ENCODE measurements at regions of chr3 and their contacts with region 1.

Region 1: DNA sequence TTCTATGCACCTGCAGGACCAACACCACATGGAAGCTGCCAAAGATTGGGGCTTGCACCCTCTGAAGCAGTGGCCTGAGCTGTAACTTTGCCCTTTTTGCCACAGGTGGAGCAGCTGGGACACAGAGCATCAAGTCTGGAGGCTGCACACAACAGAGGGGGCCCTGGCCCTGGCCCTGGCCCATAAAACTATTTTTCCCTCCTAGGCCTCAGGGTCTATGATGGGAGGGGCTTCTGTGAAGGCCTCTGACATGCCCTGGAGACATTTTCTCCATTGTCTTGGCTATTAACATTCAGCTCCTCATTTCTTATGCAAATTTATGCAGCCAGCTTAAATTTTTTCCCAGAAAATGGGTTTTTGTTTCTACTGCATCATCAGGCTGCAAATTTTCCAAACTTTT is 335.5 kb downstream of the ARPP21 start:
- ATAC-seq: no peak
- H3K4me3 ChIP-seq: no peak overlapping the region
- H3K27ac ChIP-seq: no peak overlapping the region
- H3K4me1 ChIP-seq: no peaks in the 10 kb centered on the region

Region 2: DNA sequence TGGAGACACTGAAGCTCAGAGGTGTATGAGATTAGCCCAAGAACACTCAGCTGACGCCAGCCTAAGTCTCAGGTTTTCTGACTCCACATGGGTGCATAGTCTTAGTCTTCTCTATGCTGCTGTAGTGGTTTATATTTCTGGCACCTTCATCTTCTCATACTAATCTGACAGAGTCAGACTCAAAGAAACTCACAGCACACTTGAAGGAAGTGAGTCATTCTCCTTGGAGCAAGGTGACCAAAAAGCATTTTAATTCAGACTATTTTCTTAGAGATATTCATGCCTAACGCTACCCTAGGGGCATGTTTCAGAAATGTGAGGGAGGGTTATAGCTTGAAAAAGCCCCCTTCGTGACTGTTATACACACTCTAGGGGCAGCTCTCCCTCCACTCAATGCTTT is 1110.9 kb before region 1 on chr3:
- in situ Hi-C with region 1: no loop called
- ATAC-seq: no peak
- H3K4me3 ChIP-seq: no peak overlapping the region
- H3K27ac ChIP-seq: no peak overlapping the region
- H3K4me1 ChIP-seq: peaks cover 2 to 20% of the 10 kb centered on the region in 2 donors

Region 3: DNA sequence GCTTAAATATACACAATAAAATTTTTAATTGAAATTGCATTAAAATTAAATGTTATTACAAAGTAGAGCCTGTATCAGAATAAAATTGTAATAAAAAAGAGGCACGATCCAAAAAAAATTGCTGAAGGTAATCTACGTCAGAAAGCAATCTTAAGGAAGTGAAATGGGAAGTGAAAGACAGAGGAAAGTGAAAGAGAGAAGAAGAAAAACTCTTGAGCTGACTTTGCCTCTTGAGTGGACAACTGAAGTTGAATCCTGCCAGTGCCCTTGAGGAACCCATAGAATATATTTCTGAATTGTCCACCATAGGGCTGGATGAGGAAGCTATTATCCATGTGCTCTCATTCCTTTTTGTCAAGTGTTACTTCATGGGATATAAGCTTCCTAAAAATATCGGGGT is 120.4 kb after region 1 on chr3:
- in situ Hi-C with region 1: loop called in 1 of 9 experiments (anchors 25 kb)
- ATAC-seq: no peak
- H3K4me3 ChIP-seq: no peak overlapping the region
- H3K27ac ChIP-seq: no peak overlapping the region
- H3K4me1 ChIP-seq: peaks cover 2 to 4% of the 10 kb centered on the region in 2 donors

Measured in motor neuron (in vitro differentiated cells).